ENCODE measurements at regions of chr18 and their contacts with region 1.

Region 1: GRCh38 chr18:13216092-13216582 is 2.4 kb upstream of the LDLRAD4 start:
- DNase-seq: peak; percentile 64 to 78
- ATAC-seq: peak; percentile 42 to 78 (median 74)
- H3K4me3 ChIP-seq: peak overlapping the region in 2 of 10 donors; percentile 75 to 96
- H3K27ac ChIP-seq: peak overlapping the region in 8 of 10 donors; percentile 68 to 98 (median 94)
- H3K4me1 ChIP-seq: peaks cover 5 to 36% (median 33%) of the 10 kb centered on the region in 9 donors
- H3K27me3 ChIP-seq: peaks cover 0 to 29% (median 0%) of the 10 kb centered on the region in 7 donors
- CTCF ChIP-seq: peak; percentile 49 to 91 (median 69)

Region 2: GRCh38 chr18:13289481-13290205 is 73.5 kb after region 1 on chr18:
- intact Hi-C with region 1: loop called in 2 of 10 experiments (anchors 5 kb)
- DNase-seq: peak in 1 of 2 donors; percentile 55
- ATAC-seq: peak; percentile 68 to 92 (median 86)
- H3K4me3 ChIP-seq: no peak overlapping the region
- H3K27ac ChIP-seq: peak overlapping the region in 4 of 10 donors; percentile 13 to 73 (median 34)
- H3K4me1 ChIP-seq: peaks cover 0 to 49% (median 27%) of the 10 kb centered on the region in 9 donors
- H3K27me3 ChIP-seq: no peaks in the 10 kb centered on the region
- CTCF ChIP-seq: no peak

Region 3: GRCh38 chr18:13369756-13370510 is 153.8 kb after region 1 on chr18:
- intact Hi-C with region 1: loop called in 6 of 10 experiments (anchors 5 to 10 kb)
- DNase-seq: no peak
- ATAC-seq: no peak
- H3K4me3 ChIP-seq: no peak overlapping the region
- H3K27ac ChIP-seq: no peak overlapping the region
- H3K4me1 ChIP-seq: peaks cover 0 to 33% (median 11%) of the 10 kb centered on the region in 9 donors
- H3K27me3 ChIP-seq: no peaks in the 10 kb centered on the region
- CTCF ChIP-seq: no peak

Region 4: GRCh38 chr18:13435596-13436327 is 219.6 kb after region 1 on chr18:
- intact Hi-C with region 1: loop called in 1 of 10 experiments (anchors 5 kb)
- DNase-seq: no peak
- ATAC-seq: peak in 7 of 8 donors; percentile 35 to 84 (median 63)
- H3K4me3 ChIP-seq: no peak overlapping the region
- H3K27ac ChIP-seq: peak overlapping the region in 7 of 10 donors; percentile 1 to 59 (median 30)
- H3K4me1 ChIP-seq: peaks cover 5 to 46% (median 33%) of the 10 kb centered on the region in 9 donors
- H3K27me3 ChIP-seq: no peaks in the 10 kb centered on the region
- CTCF ChIP-seq: no peak

Region 5: DNA sequence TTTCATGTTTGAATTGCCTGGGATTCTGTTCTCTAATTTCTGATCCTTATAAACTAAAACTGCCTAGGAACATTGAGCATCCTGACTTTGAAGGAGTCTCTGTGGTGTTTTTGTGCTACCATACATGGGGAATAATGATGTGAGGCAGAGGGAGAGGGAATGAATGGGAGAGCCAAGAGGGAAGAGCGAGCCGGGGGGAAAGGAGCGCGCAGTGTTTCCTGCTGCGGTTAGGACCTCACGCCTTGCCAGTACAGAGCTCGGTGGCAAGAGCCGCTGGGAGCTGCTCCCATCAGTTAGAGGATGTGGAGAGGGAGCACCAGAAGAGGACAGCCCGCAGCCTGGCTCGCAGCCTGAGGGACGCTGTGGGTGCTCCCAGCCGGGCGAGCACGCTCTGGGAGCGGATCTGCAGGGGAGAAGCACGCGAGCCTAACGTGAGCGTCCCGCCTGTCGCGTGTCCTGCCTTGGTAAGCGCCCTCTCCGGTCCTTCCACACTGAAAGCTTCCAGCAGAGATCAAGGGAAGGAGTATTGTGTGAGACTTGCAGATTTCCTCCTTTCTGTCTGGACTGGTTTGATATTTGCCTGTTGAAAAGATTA is 395.6 kb after region 1 on chr18:
- intact Hi-C with region 1: loop called in 3 of 10 experiments (anchors 5 kb)
- DNase-seq: peak; percentile 64 to 77
- ATAC-seq: peak; percentile 67 to 90 (median 74)
- H3K4me3 ChIP-seq: peak overlapping the region in 9 of 10 donors; percentile 17 to 54 (median 44)
- H3K27ac ChIP-seq: peak overlapping the region; percentile 68 to 88 (median 84)
- H3K4me1 ChIP-seq: peaks cover 17 to 75% (median 55%) of the 10 kb centered on the region in 9 donors
- H3K27me3 ChIP-seq: no peaks in the 10 kb centered on the region
- CTCF ChIP-seq: no peak

Region 6: DNA sequence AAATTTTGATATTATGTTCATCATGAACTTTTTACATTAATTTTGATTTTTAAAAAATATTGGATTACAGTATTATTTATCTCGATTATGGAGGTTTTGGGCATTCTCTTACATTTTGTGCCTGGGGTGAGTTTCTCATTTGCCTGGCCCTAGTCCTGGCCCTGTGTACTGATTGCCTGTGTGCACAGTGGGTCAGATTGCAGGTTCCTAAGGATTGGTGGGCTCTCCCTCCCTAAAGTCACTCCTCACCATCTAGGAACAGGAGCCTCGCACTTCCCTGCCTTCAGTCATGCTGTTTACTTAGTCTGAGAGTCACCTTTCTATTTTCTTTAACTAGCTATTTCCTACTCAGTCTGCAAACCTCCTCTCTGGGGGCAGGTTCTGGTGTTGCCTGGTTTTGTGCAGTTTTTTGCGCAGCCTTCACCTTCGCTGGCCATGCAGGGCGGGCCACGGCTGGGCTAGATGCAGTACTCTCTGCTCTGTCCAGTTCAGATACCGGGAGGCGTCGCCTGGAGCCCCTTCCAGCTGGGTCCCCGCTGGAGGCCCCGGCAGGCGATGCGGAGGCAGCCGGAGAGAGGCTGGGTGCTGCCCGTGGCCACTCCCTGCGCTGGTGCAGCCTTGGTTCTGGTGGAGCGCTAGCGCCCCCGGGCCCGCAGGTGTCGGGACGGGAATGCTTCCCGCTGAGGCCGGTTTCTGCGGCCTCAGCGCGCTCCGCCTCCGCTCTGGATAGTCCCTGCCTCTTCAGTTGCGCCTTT is 584.5 kb after region 1 on chr18:
- intact Hi-C with region 1: loop called in 2 of 10 experiments (anchors 10 kb)
- DNase-seq: peak; percentile 56 to 78
- ATAC-seq: peak; percentile 90 to 96 (median 92)
- H3K4me3 ChIP-seq: peak overlapping the region in 7 of 10 donors; percentile 17 to 41 (median 30)
- H3K27ac ChIP-seq: no peak overlapping the region
- H3K4me1 ChIP-seq: peaks cover 0 to 20% (median 4%) of the 10 kb centered on the region in 9 donors
- H3K27me3 ChIP-seq: peaks cover 0 to 45% (median 4%) of the 10 kb centered on the region in 7 donors
- CTCF ChIP-seq: peak; percentile 22 to 69 (median 56)

Measured in heart right ventricle (tissue), 16 donors.